Psoas muscle (tissue), 8 donors: ENCODE measurements at regions of chr12 and their contacts with region 1.

Region 1: GRCh38 chr12:122081697-122082221 is 3.2 kb downstream of the MLXIP start:
- DNase-seq: peak in 1 of 2 donors; percentile 41
- ATAC-seq: no peak
- H3K4me3 ChIP-seq: peak overlapping the region; percentile 97
- H3K27ac ChIP-seq: peak overlapping the region; percentile 98
- H3K4me1 ChIP-seq: peaks cover 62% of the 10 kb centered on the region
- H3K27me3 ChIP-seq: no peaks in the 10 kb centered on the region
- CTCF ChIP-seq: no peak

Region 2: GRCh38 chr12:122116707-122117535 is 35.2 kb after region 1 on chr12:
- intact Hi-C with region 1: loop called (anchors 5 kb)
- DNase-seq: no peak
- ATAC-seq: peak; percentile 60 to 73 (median 68)
- H3K4me3 ChIP-seq: no peak overlapping the region
- H3K27ac ChIP-seq: peak overlapping the region; percentile 84
- H3K4me1 ChIP-seq: peaks cover 60% of the 10 kb centered on the region
- H3K27me3 ChIP-seq: no peaks in the 10 kb centered on the region
- CTCF ChIP-seq: no peak

Region 3: GRCh38 chr12:122137681-122138080 is 55.9 kb after region 1 on chr12:
- intact Hi-C with region 1: no loop called
- DNase-seq: no peak
- ATAC-seq: no peak
- H3K4me3 ChIP-seq: no peak overlapping the region
- H3K27ac ChIP-seq: no peak overlapping the region
- H3K4me1 ChIP-seq: peaks cover 28% of the 10 kb centered on the region
- H3K27me3 ChIP-seq: no peaks in the 10 kb centered on the region
- CTCF ChIP-seq: no peak

Region 4: GRCh38 chr12:122526683-122527477 is 445.1 kb after region 1 on chr12 and contains the starts of genes KNTC1 and RSRC2:
- intact Hi-C with region 1: no loop called
- DNase-seq: peak; percentile 95 to 98
- ATAC-seq: peak; percentile 93 to 98 (median 97)
- H3K4me3 ChIP-seq: peak within 1 kb of the TSS; percentile 85
- H3K27ac ChIP-seq: peak within 1 kb of the TSS; percentile 98
- H3K4me1 ChIP-seq: peaks cover 48% of the 10 kb centered on the region
- H3K27me3 ChIP-seq: no peaks in the 10 kb centered on the region
- CTCF ChIP-seq: no peak
- total RNA-seq, gene KNTC1: 1.5 to 2.5 (median 2.2) TPM
- total RNA-seq, gene RSRC2: 44.0 to 64.6 (median 53.3) TPM

Region 5: DNA sequence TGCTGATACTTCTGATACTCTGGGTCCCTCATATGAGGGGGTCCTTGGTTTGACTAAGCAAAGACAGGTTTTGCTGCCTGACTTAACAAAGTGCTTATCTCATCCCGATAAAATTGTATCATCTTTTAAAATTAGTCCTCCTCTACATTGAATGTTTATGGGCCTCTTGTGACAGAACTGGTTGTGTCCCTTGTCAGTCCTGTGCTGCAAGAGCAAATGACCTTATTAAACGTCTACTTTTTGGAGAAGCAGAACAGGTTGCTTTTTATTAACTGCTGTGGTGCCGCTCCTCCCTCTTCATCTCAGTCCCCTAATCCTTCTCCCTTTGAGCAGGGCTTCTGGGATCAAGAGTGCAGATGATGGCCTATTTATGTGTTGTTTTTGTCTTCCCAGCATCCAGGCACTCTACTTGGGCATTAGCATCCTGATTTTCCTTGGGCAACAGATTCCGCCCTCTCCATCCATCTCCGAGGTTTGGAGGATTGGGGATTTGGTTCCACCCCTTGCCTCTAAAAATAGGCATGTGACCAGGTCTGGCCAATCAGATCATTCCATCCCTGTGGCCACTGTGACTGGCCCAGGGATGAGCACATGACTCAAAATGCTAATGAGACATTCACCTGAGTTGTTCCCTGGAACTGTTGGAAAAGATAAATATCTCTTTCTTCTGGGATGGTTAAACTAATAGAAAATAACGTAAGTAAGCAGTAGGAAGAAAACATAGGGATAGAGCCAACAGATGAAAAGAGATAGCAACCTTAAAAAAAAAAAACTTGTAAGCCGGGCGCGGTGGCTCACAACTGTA is 668.0 kb after region 1 on chr12:
- intact Hi-C with region 1: no loop called
- DNase-seq: no peak
- ATAC-seq: no peak
- H3K4me3 ChIP-seq: no peak overlapping the region
- H3K27ac ChIP-seq: no peak overlapping the region
- H3K4me1 ChIP-seq: peaks cover 14% of the 10 kb centered on the region
- H3K27me3 ChIP-seq: no peaks in the 10 kb centered on the region
- CTCF ChIP-seq: no peak